Naive thymus-derived CD4-positive, alpha-beta T cell (primary cell): ENCODE measurements at regions of chr3 and their contacts with region 1.

Region 1: DNA sequence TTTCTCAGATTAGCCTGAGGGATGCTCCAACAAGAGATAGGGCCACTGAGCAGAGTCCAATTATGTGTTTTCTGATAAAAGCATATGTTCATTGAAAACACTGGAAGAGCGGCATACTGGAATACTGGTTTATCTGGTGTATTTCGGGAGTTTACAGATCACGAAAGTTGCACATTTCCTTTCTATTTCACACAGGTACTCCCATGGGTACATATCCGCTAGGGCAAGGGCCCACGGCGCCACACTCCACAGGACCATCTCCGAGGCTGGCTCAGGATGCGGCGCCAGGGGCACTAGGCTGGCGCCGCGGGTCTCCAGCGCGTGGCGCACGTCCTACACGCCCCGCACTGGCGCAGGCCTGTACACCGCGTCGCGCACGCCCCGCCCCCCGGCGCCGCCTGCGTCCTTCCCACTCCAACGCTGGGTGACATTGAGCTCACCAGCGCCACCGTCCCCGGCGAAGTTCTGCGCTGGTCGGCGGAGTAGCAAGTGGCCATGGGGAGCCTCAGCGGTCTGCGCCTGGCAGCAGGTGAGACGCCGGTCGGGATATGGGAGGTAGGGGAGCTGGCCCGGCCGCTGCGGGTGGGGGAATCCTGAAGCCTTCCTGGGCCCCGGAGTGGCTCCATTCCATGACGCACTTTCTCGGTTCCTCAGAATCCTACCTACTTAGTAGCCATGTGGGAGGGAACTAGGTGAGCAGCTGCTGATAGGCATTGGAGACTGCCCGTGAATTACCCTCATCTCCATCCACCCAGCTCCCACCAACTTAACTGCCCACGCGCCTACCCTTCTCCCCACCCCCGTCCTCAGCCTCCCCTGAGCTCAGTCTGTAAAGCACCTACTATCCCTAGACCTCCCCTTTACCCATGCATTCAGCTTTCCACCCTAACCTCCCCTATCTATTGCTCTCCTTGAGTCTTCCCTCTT is at the start of gene FAM162A:
- DNase-seq: peak; percentile 90 to 94 (median 92)
- ATAC-seq: peak; percentile 98
- H3K4me3 ChIP-seq: peak within 1 kb of the TSS; percentile 84
- H3K4me3 Mint-ChIP-seq: peak within 1 kb of the TSS; percentile 87 to 99 (median 95)
- H3K27ac ChIP-seq: peak within 1 kb of the TSS; percentile 85
- H3K27ac Mint-ChIP-seq: peak within 1 kb of the TSS; percentile 88 to 98 (median 95)
- H3K4me1 ChIP-seq: peaks cover 12 to 15% of the 10 kb centered on the region in 2 donors
- H3K4me1 Mint-ChIP-seq: peaks cover 18 to 69% (median 55%) of the 10 kb centered on the region in 7 donors
- H3K27me3 ChIP-seq: no peaks in the 10 kb centered on the region
- H3K27me3 Mint-ChIP-seq: no peaks in the 10 kb centered on the region
- total RNA-seq, gene FAM162A: 17.6 to 73.2 (median 35.5) TPM

Region 2: GRCh38 chr3:120596116-120596852 is 1787.8 kb before region 1 on chr3 and contains the start of gene NDUFB4:
- CTCF ChIA-PET with region 1: no interaction called
- POLR2A ChIA-PET with region 1: no interaction called
- intact Hi-C with region 1: loop called in 1 of 2 experiments (anchors 5 kb)
- DNase-seq: peak; percentile 84 to 97 (median 93)
- ATAC-seq: peak; percentile 97
- H3K4me3 ChIP-seq: peak within 1 kb of the TSS; percentile 99
- H3K4me3 Mint-ChIP-seq: peak within 1 kb of the TSS in 8 of 10 donors; percentile 85 to 99 (median 96)
- H3K27ac ChIP-seq: peak within 1 kb of the TSS; percentile 92
- H3K27ac Mint-ChIP-seq: peak within 1 kb of the TSS in 5 of 9 donors; percentile 94 to 99 (median 98)
- H3K4me1 ChIP-seq: peaks cover 25 to 27% of the 10 kb centered on the region in 2 donors
- H3K4me1 Mint-ChIP-seq: peaks cover 0 to 20% (median 11%) of the 10 kb centered on the region in 7 donors
- H3K27me3 ChIP-seq: no peaks in the 10 kb centered on the region
- H3K27me3 Mint-ChIP-seq: peaks cover 0 to 20% (median 0%) of the 10 kb centered on the region in 5 donors
- total RNA-seq, gene NDUFB4: 63.4 to 126 (median 76.2) TPM

Region 3: DNA sequence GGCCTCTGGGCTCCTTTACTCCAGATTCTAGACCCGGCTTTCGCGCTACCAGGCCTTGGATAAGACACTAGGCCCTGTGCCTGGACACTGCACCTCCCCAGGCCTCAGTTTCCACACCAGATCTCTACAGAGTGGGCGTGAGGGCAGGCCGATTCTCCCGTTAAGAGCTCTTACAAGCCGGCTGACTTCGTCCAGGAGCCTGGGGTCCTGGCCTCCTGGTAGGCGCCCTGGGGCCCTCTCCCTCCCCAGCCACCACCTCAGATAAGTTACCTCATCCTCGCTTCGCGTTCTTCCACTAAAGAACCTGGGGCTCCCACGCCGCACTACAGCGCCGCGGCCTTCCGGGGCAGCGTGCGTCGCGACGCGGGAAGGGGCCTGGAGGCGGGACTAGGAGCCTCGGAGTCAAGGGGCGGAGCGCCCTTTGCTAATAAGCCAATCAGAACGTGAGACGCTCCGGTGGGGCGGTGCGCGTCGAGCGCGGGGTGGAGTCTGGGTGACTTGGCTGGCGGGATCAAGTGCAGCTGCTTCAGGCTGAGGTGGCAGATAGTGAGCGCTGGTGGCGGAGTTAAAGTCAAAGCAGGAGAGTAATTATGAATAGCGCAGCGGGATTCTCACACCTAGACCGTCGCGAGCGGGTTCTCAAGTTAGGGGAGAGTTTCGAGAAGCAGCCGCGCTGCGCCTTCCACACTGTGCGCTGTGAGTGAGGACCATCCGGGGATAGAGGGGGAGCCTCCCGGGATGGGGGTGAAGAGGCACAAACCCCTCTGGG is 549.2 kb before region 1 on chr3 and contains the starts of genes EAF2 and IQCB1:
- CTCF ChIA-PET with region 1: no interaction called
- POLR2A ChIA-PET with region 1: interaction called, 5 read pairs
- intact Hi-C with region 1: loop called (anchors 1 to 2 kb)
- DNase-seq: peak; percentile 93 to 98 (median 97)
- ATAC-seq: peak; percentile 99
- H3K4me3 ChIP-seq: peak within 1 kb of the TSS; percentile 85
- H3K4me3 Mint-ChIP-seq: peak within 1 kb of the TSS; percentile 83 to 97 (median 93)
- H3K27ac ChIP-seq: peak within 1 kb of the TSS; percentile 89
- H3K27ac Mint-ChIP-seq: peak within 1 kb of the TSS; percentile 78 to 98 (median 92)
- H3K4me1 ChIP-seq: peaks cover 10 to 14% of the 10 kb centered on the region in 2 donors
- H3K4me1 Mint-ChIP-seq: peaks cover 32 to 65% (median 58%) of the 10 kb centered on the region in 7 donors
- H3K27me3 ChIP-seq: no peaks in the 10 kb centered on the region
- H3K27me3 Mint-ChIP-seq: no peaks in the 10 kb centered on the region
- total RNA-seq, gene EAF2: 6.4 to 16.1 (median 7.5) TPM
- total RNA-seq, gene IQCB1: 32.6 to 45.6 (median 35.8) TPM

Region 4: DNA sequence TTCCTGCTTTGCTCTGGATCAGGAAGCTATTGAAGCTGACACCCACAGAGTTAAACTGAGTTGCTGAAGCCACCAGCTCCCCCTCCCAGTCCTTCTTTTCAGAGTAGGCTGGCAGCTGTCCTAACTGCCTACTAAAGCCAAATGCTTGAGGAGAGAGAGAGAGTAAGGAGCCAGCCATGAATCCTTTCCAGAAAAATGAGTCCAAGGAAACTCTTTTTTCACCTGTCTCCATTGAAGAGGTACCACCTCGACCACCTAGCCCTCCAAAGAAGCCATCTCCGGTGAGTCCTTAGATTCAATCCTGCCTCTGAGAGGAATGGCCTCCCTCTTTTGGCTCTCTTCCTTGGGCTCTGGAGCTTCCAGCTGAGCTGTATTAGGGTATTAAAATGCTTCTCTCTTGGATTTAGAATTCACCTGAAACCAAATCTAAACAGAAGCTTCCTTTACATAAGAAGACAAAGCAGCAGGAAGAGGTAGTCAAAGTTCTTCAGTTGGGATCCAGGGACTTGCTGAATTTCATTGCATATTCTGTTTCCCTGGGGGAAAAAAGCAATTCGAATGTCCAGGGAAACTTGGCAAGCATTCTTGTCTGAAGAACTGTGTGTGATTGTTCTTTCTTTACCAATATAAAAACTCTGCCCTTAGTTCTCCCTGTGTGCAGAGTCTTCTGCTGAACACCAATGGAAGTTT is 489.6 kb before region 1 on chr3 and contains the start of gene SLC15A2:
- CTCF ChIA-PET with region 1: no interaction called
- POLR2A ChIA-PET with region 1: no interaction called
- intact Hi-C with region 1: no loop called
- DNase-seq: no peak
- ATAC-seq: no peak
- H3K4me3 ChIP-seq: no peak within 1 kb of the TSS
- H3K4me3 Mint-ChIP-seq: no peak within 1 kb of the TSS
- H3K27ac ChIP-seq: no peak within 1 kb of the TSS
- H3K27ac Mint-ChIP-seq: no peak within 1 kb of the TSS
- H3K4me1 ChIP-seq: no peaks in the 10 kb centered on the region
- H3K4me1 Mint-ChIP-seq: peaks cover 0 to 1% (median 0%) of the 10 kb centered on the region in 7 donors
- H3K27me3 ChIP-seq: no peaks in the 10 kb centered on the region
- H3K27me3 Mint-ChIP-seq: no peaks in the 10 kb centered on the region
- total RNA-seq, gene SLC15A2: 1.6 to 6.8 (median 3.8) TPM

Region 5: GRCh38 chr3:122322095-122323075 is 61.6 kb before region 1 on chr3:
- CTCF ChIA-PET with region 1: no interaction called
- POLR2A ChIA-PET with region 1: interaction called, 3 read pairs
- intact Hi-C with region 1: loop called in 1 of 2 experiments (anchors 5 kb)
- DNase-seq: peak in 8 of 9 donors; percentile 35 to 70 (median 59)
- ATAC-seq: peak; percentile 96
- H3K4me3 ChIP-seq: no peak overlapping the region
- H3K4me3 Mint-ChIP-seq: peak overlapping the region in 6 of 10 donors; percentile 7 to 59 (median 40)
- H3K27ac ChIP-seq: peak overlapping the region; percentile 22
- H3K27ac Mint-ChIP-seq: peak overlapping the region in 8 of 9 donors; percentile 3 to 80 (median 52)
- H3K4me1 ChIP-seq: peaks cover 0 to 13% of the 10 kb centered on the region in 2 donors
- H3K4me1 Mint-ChIP-seq: peaks cover 16 to 35% (median 21%) of the 10 kb centered on the region in 7 donors
- H3K27me3 ChIP-seq: no peaks in the 10 kb centered on the region
- H3K27me3 Mint-ChIP-seq: peaks cover 0 to 16% (median 0%) of the 10 kb centered on the region in 5 donors

Region 6: DNA sequence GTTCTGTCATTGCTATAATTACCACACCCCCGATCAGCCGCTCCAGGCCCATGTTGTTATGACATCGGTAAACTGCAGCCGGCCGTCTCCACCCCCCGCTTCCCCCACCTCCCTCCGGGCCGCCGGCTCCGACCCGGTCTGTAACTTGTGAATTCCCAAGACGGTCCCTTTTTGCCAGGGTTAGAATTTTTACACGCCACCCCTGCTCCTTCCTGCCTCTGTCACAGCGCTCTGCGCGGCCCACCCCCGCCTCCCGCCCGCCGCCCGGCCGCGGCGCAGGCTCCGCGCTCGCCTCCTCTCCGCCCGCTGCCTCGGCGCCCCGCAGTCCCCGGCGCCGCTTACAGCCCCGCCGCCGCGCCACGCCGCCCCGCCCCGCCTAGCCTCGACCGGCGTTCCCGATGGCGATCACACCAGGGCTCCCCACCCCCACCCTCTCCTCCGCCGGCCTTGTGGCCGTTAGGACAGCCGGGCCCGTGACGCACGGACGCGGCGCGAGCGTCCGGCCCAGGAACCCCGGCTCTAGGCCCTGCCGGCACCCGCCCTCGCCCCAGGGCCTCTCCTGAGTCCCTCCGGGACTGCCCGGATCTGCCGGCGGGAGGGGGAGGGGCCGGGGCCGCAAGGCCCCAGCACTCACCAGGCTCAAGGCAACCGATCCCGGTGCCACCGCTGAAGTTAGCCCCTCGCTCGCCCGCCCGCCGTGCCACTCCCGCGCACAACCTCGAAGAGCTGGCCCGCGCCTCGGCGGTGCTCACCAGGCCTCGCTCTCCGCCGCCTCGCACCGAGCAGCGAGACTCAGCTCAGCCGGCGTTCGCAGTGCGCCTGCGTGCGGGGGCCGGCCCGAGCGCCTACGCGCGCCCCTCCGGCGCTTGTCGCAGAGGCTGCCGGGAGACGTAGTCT is 130.3 kb after region 1 on chr3 and contains the start of gene KPNA1:
- CTCF ChIA-PET with region 1: no interaction called
- POLR2A ChIA-PET with region 1: interaction called, 10 read pairs
- intact Hi-C with region 1: loop called (anchors 1 kb)
- DNase-seq: peak; percentile 81 to 92 (median 90)
- ATAC-seq: peak; percentile 92
- H3K4me3 ChIP-seq: peak within 1 kb of the TSS; percentile 80
- H3K4me3 Mint-ChIP-seq: peak within 1 kb of the TSS; percentile 77 to 100 (median 92)
- H3K27ac ChIP-seq: peak within 1 kb of the TSS; percentile 100
- H3K27ac Mint-ChIP-seq: peak within 1 kb of the TSS; percentile 78 to 97 (median 91)
- H3K4me1 ChIP-seq: peaks cover 6 to 21% of the 10 kb centered on the region in 2 donors
- H3K4me1 Mint-ChIP-seq: peaks cover 35 to 52% (median 46%) of the 10 kb centered on the region in 7 donors
- H3K27me3 ChIP-seq: no peaks in the 10 kb centered on the region
- H3K27me3 Mint-ChIP-seq: no peaks in the 10 kb centered on the region
- total RNA-seq, gene KPNA1: 50.6 to 70.2 (median 54.3) TPM

Region 7: DNA sequence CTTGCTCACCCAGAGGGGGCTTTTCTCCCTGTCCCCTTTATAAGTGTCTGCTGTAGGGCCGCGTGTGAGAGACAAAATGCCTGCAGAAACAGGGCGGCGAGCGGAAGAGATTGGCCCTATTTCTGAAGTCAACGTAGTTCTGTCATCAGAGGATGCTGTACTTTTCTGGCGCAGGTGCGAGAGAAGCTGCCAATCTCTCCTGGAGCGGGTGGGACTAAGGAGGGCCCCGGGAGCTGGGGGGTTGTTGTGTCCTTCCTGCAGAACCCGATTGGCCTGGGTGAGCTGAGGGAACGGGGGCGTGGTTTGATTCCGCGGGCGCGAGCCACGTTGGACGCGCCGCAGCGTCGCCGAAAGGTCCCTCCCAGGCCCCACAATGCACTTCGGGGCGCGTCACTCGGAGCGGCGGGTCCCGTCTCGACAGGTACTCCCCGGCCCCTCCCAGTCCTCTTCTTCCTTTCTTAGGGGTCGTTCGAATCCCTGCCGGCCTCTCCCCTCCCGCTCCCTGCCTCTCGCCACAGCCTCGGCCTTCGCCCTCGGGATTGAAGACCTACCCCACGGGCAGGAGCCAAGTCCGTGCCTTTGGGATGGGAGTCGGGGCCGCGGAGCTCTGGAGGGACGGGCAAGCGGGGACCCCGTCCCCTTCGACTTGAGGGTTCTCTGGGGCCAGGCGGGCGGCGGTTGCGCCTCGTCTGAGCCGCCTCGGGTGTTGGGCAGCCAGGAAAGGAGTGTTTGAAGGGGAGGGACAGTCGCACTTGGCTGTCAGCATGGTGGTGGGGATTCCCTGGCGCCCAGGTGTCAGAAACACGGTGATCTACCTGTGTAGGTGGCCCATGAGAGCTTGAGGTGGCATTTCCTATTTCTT is 817.8 kb after region 1 on chr3 and contains the start of gene SEC22A:
- CTCF ChIA-PET with region 1: no interaction called
- POLR2A ChIA-PET with region 1: interaction called, 9 read pairs
- intact Hi-C with region 1: loop called (anchors 1 kb)
- DNase-seq: peak; percentile 89 to 99 (median 97)
- ATAC-seq: peak; percentile 97
- H3K4me3 ChIP-seq: peak within 1 kb of the TSS; percentile 90
- H3K4me3 Mint-ChIP-seq: peak within 1 kb of the TSS; percentile 82 to 98 (median 92)
- H3K27ac ChIP-seq: peak within 1 kb of the TSS; percentile 99
- H3K27ac Mint-ChIP-seq: peak within 1 kb of the TSS; percentile 97 to 100 (median 99)
- H3K4me1 ChIP-seq: peaks cover 12% of the 10 kb centered on the region in 2 donors
- H3K4me1 Mint-ChIP-seq: peaks cover 13 to 41% (median 31%) of the 10 kb centered on the region in 7 donors
- H3K27me3 ChIP-seq: no peaks in the 10 kb centered on the region
- H3K27me3 Mint-ChIP-seq: peaks cover 0 to 9% (median 2%) of the 10 kb centered on the region in 5 donors
- total RNA-seq, gene SEC22A: 15.0 to 20.1 (median 17.1) TPM